ENCODE measurements at regions of chr15 and their contacts with region 1.

Region 1: GRCh38 chr15:72671535-72671934 is 14.4 kb downstream of the HIGD2B start:
- DNase-seq: no peak
- ATAC-seq: peak; percentile 15
- H3K4me3 Mint-ChIP-seq: peak overlapping the region; percentile 65
- H3K27ac Mint-ChIP-seq: peak overlapping the region; percentile 63
- H3K4me1 Mint-ChIP-seq: peaks cover 22% of the 10 kb centered on the region
- H3K27me3 Mint-ChIP-seq: no peaks in the 10 kb centered on the region
- CTCF ChIP-seq: no peak

Region 2: GRCh38 chr15:72599855-72600464 is 71.6 kb before region 1 on chr15:
- CTCF ChIA-PET with region 1: interaction called, 79 read pairs
- POLR2A ChIA-PET with region 1: no interaction called
- DNase-seq: no peak
- ATAC-seq: peak; percentile 32
- H3K4me3 Mint-ChIP-seq: no peak overlapping the region
- H3K27ac Mint-ChIP-seq: no peak overlapping the region
- H3K4me1 Mint-ChIP-seq: peaks cover 10% of the 10 kb centered on the region
- H3K27me3 Mint-ChIP-seq: no peaks in the 10 kb centered on the region
- CTCF ChIP-seq: 0 out of 2 replicates have a peak, but pooled peaks have one; percentile 29

Region 3: DNA sequence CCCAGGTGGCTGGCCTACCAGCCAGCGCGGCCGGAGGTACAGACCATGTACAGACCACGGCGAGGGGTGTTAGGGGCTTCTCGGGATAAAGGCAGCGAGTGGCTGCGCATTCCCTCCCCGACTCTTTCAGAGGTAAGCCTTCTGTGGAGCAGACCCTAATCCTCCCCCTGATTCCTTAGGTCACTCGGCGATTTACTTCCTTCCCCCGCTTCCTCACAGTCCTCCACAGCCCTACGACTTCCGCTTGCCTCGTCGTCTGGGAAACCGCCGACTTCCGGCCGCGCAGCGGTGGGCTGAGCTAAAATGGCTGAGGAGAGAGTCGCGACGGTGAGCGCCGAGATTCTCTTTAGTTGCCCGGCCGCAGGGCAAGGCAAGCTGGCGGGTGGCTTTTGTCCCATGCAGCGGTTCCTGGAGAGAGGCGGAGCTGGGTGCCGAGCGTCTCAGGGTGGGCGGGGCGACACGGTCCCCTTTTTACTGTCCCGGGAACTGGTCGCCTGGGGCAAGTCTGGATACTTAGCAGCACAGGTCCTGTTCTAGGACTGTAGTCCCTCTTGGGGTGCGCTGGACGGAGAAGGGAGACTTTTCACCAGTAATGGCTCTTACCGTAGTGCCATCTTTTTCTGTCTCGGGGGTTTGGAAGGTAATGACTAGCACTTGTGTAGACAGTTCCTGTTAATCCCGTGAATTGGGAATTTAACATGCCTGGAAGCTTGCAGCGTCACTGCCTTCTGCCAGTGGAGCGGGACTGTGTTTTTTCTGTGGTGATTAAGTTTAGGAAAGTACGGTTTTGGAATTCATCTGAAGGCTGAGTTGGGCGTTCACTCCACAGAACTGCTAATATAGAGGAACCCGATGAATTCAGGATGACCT is 14.6 kb after region 1 on chr15 and contains the starts of genes BBS4 and HIGD2B:
- CTCF ChIA-PET with region 1: interaction called, 26 read pairs
- POLR2A ChIA-PET with region 1: interaction called, 5 read pairs
- DNase-seq: peak; percentile 89
- ATAC-seq: peak; percentile 92
- H3K4me3 Mint-ChIP-seq: peak within 1 kb of the TSS; percentile 88
- H3K27ac Mint-ChIP-seq: peak within 1 kb of the TSS; percentile 93
- H3K4me1 Mint-ChIP-seq: peaks cover 14% of the 10 kb centered on the region
- H3K27me3 Mint-ChIP-seq: no peaks in the 10 kb centered on the region
- CTCF ChIP-seq: no peak
- total RNA-seq, gene BBS4: 29.3 to 35.6 TPM (median 31.5 TPM) in 3 replicates
- total RNA-seq, gene HIGD2B: 0.18 TPM in 1 of 3 replicates, not detected in the others

Region 4: GRCh38 chr15:72740219-72740618 is 68.7 kb after region 1 on chr15:
- CTCF ChIA-PET with region 1: no interaction called
- POLR2A ChIA-PET with region 1: no interaction called
- DNase-seq: no peak
- ATAC-seq: no peak
- H3K4me3 Mint-ChIP-seq: no peak overlapping the region
- H3K27ac Mint-ChIP-seq: no peak overlapping the region
- H3K4me1 Mint-ChIP-seq: no peaks in the 10 kb centered on the region
- H3K27me3 Mint-ChIP-seq: no peaks in the 10 kb centered on the region
- CTCF ChIP-seq: no peak